ENCODE measurements at regions of chr5 and their contacts with region 1.

Region 1: DNA sequence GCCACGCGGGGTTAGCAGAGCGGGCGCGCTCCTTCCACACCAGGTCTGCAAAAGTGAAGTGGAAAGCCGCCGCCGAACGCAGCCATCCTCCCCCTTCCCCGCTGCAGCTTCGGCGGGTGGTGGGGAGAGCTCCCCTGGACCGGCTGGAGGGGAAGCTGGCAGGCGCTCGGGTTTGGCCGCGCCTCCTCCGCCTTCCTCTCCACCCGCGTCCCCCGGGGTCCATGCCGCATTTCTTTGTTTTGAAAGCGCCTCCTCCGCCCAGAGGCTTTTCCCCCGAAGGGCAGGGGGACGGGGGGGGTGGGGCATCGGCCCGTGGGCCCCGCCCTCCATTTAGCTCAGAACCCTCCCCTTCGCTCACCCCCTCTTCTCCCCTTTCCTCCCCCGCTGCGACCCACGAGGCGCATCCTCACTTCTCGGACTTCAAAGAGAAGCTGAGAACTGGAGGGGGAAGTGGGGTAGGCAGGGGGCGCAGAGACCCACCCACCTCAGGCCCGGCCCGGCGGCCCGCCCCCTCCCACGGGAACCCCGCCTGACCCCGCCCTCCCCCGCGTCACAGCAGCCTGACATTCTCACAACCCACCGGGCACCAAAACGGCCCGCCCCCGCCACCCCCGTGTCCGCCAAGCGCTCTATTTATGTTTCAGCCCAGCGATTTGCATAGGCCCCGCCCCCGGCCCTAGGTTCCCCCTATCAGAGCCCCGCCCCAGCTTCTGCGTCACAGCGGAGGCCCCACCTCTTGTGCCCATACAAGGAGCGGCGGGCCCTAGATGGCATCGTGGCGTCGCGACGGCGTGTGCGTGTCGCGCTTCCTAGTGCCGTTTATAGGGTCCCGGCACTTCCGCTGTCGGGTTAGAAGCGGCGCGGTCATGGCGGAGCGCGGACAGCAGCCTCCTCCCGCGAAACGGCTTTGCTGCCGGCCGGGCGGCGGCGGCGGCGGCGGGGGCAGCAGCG is at the start of gene ZSWIM6:
- DNase-seq: peak; percentile 100
- ATAC-seq: peak; percentile 95
- total RNA-seq, gene ZSWIM6: 8.1 TPM

Region 2: DNA sequence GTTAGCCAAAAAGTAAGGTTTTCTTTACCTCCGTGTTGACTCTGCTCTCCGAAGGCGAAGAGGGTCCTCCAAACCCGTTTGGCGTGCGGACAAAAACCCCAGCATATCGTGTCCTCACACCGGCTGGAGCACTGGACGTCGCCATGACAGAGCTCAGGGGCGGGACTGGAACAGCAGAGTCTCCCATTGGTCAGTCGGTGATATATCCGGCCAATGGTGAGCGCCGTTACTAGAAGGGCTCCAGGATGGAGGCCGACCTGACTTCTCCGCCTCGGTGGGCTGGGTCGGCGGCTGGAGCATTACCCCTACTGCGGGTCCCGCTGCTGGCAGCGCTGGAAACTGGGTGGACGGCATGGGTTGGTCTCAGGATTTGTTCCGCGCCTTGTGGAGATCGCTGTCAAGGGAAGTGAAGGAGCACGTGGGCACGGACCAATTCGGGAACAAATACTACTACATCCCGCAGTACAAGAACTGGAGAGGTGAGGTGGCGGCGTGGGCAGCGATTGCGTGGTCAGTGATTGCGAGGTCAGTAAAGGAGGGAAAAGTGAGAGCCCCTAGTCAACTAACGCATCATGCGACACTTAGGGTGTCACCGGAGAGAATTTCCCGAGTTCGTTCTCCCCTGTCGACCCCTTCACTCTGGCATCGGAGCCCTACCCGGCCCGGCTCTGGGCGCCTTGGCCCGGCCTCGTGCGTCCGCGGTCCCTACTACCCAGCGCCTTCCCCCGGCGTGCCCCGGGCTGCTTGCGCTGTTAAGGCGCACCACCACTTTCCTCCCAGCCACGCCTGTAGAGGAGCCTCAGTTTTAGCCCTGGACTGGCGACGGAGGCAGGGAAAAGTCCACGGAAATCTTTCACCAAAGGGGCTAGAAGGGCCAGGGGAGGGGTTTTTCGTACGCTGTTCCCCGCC is 386.5 kb before region 1 on chr5 and contains the starts of genes ERCC8 and NDUFAF2:
- intact Hi-C with region 1: loop called (anchors 10 kb)
- DNase-seq: peak; percentile 93
- ATAC-seq: peak; percentile 99
- total RNA-seq, gene ERCC8: 4.2 TPM
- total RNA-seq, gene NDUFAF2: 42.6 TPM

Region 3: DNA sequence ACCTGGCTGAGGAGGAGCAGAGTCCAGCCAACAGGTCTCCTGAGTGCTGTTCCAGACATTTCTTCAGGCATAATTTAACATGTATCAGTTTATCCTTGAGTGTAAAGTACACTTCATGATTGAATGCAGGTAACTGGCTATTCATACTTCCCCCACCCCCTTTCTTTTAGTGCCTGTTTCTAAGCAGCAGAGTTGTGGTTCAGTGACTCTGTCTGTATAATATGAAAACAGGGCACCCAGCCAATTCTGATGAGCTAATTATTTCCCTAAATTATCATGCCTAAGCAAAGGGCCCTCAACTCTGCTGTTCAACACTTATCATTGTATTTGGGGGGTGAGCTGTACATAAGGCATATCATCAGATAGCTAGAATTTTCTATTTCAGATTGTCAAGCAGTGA is 51.5 kb before region 1 on chr5:
- intact Hi-C with region 1: no loop called
- DNase-seq: no peak
- ATAC-seq: no peak

Region 4: DNA sequence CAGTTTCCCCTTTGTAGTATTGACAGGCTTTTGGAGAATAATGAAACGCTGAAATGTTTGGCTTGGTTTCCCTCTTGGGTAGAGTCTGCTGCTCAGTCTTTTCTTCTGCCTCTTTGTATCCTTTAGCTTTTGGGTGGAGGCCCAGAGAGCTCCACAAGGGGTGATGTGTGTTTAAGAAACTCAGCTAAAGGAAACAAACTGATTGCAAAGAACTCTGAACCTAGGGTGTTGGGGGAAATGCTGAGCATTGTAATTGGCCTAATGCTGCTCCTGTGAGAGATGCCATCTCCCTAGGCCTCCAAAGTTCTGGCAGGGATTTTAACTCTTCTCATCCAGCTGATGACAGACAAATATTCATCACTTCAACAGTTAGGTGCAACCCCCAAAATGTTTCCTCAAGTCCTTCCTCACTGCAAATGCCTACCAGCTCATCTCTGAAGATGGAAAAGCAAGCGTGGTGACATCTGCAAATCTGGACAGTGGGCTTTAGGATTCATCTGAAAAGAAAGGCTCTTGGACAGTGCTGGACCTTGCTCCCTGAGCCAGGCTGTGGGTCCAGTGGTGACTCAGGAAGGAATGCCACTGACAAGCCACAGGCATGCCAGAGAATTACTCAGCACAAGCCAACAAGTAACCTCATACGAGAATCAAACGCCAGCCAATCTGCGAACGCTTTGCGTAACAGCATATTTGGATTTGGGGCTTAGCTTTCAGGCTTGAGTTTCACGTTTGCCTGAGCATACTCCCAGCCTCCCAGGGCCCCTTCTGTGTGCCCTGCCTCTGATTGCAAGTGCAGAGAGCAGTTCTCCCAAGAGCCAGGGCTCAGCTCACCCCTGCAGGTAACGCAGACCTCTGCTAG is 30.1 kb before region 1 on chr5:
- intact Hi-C with region 1: loop called (anchors 1 kb)
- DNase-seq: no peak
- ATAC-seq: peak; percentile 92

Region 5: DNA sequence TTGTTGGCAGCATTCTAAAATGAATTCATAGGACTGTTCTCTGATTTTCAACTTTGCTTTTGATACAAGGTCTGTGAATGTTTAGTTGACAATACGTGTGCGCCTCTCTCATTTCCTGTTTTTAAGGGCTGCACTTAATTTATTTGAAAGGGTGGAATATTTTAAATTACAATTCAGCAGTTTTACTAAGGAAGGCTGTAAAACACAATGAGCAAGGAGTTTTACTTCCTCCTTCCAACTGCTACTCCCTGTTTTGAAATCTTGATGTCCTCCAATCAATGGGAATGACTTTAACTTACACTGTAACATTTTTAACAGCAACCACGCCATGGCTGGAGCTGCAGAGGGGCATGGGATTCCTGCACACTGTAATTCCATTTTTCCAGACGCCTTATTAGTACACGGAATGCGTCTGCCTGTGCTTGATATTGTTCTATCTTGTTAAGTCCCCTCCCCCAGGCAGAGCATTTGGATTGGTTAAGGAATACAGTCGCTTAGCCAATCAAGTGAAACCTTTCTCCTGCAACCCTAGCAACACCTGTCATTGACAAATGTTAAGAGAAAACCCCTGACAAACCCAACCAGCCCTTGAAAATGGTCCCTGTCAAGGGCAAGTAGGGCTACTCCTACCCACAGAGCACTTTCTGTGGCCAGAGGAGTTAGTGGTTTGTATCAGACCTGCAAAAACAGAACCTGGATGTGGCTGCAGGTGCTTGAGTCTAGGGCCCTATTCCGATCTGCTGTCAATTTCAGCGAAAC is 12.1 kb before region 1 on chr5:
- intact Hi-C with region 1: no loop called
- DNase-seq: no peak
- ATAC-seq: peak; percentile 59

Region 6: GRCh38 chr5:61625681-61626621 is 294.3 kb after region 1 on chr5:
- intact Hi-C with region 1: loop called (anchors 2 kb)
- DNase-seq: peak; percentile 89
- ATAC-seq: peak; percentile 96

Region 7: GRCh38 chr5:61933787-61934626 is 602.3 kb after region 1 on chr5:
- intact Hi-C with region 1: loop called (anchors 5 kb)
- DNase-seq: no peak
- ATAC-seq: no peak

Measured in Right ventricle myocardium inferior (tissue), 1 donor.